ENCODE measurements at regions of chr6 and their contacts with region 1.

Region 1: GRCh38 chr6:73180763-73181619 is 44.3 kb downstream of the KHDC1L start:
- DNase-seq: no peak
- ATAC-seq: peak; percentile 93
- H3K4me3 Mint-ChIP-seq: peak overlapping the region; percentile 69
- H3K27ac Mint-ChIP-seq: peak overlapping the region; percentile 33
- H3K4me1 Mint-ChIP-seq: peaks cover 14% of the 10 kb centered on the region
- H3K27me3 Mint-ChIP-seq: no peaks in the 10 kb centered on the region
- CTCF ChIP-seq: peak; percentile 34

Region 2: DNA sequence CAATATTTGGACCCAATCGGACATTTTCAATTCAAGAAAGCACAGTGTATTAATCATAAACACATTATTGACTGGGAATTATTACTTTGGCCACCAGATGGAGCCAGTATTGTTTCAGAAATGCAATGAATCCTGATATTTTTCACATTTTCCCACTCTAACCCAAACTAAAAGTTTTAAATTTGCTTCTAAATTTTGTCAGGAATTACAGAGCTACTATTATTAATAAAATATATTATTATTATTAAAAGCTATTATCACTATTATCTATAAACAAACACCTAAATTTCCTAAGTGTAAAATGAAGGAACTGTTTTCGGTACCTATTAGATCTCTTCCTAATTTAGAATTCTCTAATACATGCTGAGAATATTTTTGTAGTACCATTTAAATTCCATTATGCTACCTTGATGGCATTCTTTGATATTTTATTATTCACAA is 1647.0 kb before region 1 on chr6:
- CTCF ChIA-PET with region 1: interaction called, 3 read pairs
- POLR2A ChIA-PET with region 1: no interaction called
- intact Hi-C with region 1: loop called (anchors 1 kb)
- DNase-seq: no peak
- ATAC-seq: no peak
- H3K4me3 Mint-ChIP-seq: no peak overlapping the region
- H3K27ac Mint-ChIP-seq: no peak overlapping the region
- H3K4me1 Mint-ChIP-seq: no peaks in the 10 kb centered on the region
- H3K27me3 Mint-ChIP-seq: peaks cover 5% of the 10 kb centered on the region
- CTCF ChIP-seq: peak; percentile 23

Region 3: DNA sequence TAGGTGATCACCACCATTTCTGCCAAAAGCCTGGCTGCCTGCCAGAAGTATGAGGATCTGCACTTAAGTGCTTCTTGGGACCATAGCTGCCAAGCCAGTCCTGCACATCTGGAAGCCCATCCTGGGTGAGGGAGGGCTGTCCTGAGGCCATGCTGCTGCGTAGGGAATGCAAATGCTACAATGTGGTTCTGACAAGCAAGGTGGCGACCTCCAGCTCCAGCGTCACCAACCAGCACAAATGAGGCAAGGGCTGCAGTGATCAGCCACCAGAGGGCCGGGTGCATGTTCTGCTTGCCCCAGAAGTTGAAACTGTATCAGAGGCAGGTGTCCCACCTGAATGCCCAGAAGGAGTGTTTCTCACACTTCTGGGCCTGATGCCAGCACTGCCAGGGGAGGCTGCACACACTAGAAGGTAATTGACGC is 658.3 kb before region 1 on chr6:
- CTCF ChIA-PET with region 1: no interaction called
- POLR2A ChIA-PET with region 1: no interaction called
- intact Hi-C with region 1: loop called (anchors 1 kb)
- DNase-seq: no peak
- ATAC-seq: no peak
- H3K4me3 Mint-ChIP-seq: no peak overlapping the region
- H3K27ac Mint-ChIP-seq: no peak overlapping the region
- H3K4me1 Mint-ChIP-seq: no peaks in the 10 kb centered on the region
- H3K27me3 Mint-ChIP-seq: peaks cover 20% of the 10 kb centered on the region
- CTCF ChIP-seq: no peak

Region 4: GRCh38 chr6:73129653-73130443 is 51.1 kb before region 1 on chr6:
- CTCF ChIA-PET with region 1: interaction called, 9 read pairs
- POLR2A ChIA-PET with region 1: no interaction called
- intact Hi-C with region 1: loop called (anchors 1 kb)
- DNase-seq: peak; percentile 72
- ATAC-seq: peak; percentile 90
- H3K4me3 Mint-ChIP-seq: peak overlapping the region; percentile 33
- H3K27ac Mint-ChIP-seq: no peak overlapping the region
- H3K4me1 Mint-ChIP-seq: peaks cover 4% of the 10 kb centered on the region
- H3K27me3 Mint-ChIP-seq: no peaks in the 10 kb centered on the region
- CTCF ChIP-seq: peak; percentile 8

Region 5: DNA sequence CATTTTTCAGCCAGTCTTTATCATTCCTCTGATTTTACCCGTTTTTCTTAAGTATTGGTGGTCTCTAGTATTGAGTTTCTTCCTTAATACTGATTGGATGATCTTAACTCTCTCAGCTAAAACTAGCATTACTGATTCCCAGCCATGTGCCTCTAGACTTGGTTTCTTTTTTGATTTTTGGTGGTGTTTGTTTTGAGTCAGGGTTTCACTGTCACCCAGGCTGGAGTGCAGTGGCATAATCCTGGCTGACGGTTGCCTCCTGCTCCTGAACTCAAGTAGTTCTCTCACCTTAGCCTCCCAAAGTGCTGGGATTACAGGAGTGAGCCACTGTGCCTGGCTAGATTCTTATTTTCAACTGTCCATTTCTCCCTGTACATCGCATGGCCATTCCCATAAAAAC is 148.2 kb after region 1 on chr6:
- CTCF ChIA-PET with region 1: interaction called, 3 read pairs
- POLR2A ChIA-PET with region 1: no interaction called
- intact Hi-C with region 1: loop called (anchors 1 kb)
- DNase-seq: no peak
- ATAC-seq: no peak
- H3K4me3 Mint-ChIP-seq: no peak overlapping the region
- H3K27ac Mint-ChIP-seq: no peak overlapping the region
- H3K4me1 Mint-ChIP-seq: peaks cover 2% of the 10 kb centered on the region
- H3K27me3 Mint-ChIP-seq: peaks cover 26% of the 10 kb centered on the region
- CTCF ChIP-seq: no peak

Measured in activated B cell treated with CpG ODN at 0.5 μM for 24 hours (primary cell).